ENCODE measurements at regions of chr3 and their contacts with region 1.

Region 1: DNA sequence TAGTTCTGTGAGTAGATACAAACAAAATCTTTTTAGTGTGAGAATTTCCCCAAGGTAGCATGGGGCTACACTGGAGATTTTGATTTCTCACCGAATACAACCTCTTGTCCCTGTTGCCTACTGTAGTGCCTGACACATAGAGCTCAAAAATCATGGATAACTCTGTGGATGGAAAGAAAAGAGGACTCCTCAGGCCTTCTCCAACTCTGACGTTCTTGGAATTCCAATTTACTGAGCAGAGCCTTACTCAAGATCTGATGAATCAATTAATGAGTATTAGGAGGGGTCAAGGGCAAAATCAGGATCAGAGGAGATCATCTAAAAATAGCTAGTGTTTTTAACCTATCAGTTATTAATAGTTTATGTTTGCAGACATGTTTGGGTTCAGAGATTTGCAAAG is 46.7 kb upstream of the PYDC2 start:
- DNase-seq: no peak

Region 2: GRCh38 chr3:191301017-191301416 is 113.3 kb before region 1 on chr3:
- intact Hi-C with region 1: no loop called
- DNase-seq: no peak

Region 3: GRCh38 chr3:192423003-192423349 is 1008.7 kb after region 1 on chr3:
- intact Hi-C with region 1: loop called (anchors 5 kb)
- DNase-seq: no peak

Region 4: GRCh38 chr3:192444096-192444790 is 1030.0 kb after region 1 on chr3:
- intact Hi-C with region 1: loop called (anchors 2 kb)
- DNase-seq: peak; percentile 82